GM10248 (cell line): ENCODE measurements at regions of chr3 and their contacts with region 1.

Region 1: DNA sequence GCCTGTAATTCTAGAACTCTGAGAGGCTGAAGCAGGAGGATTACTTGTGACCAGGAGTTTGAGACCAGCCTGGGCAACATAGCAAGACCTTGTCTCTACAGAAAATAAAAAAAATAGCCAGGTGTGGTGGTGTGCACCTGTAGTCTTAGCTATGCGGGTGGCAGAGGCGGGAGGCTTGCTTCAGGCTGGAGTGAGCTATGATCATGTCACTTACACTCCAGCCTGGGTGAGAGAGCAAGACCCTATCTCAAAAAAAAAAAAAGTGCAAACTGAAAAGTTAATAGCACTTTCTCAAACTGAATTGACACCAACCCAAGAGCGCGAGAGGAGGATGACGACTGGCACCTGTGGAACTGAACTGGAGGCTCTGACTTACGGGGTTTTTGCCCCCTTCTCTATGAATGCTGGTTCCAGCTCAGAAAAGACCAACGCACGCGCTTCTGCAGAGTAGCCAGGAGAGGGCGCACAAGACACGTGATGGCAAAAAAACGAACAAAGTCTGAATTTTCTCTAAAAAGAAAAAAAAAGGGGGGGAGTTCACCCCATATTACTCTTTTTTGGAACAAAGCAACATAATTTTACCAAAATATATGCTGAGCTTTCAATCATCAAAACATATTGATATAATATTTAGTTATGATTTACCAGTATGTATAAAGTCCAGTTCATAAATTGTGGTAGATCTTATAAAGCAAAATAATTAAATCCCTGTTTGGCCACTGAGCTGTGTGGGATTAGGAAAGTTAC is 23.7 kb downstream of the CFAP92 start:
- DNase-seq: peak; percentile 68
- CTCF ChIP-seq: peak; percentile 95

Region 2: GRCh38 chr3:128950223-128950938 is 19.8 kb before region 1 on chr3:
- CTCF ChIA-PET with region 1: interaction called, 11 read pairs
- POLR2A ChIA-PET with region 1: no interaction called
- DNase-seq: no peak
- CTCF ChIP-seq: peak; percentile 40

Region 3: DNA sequence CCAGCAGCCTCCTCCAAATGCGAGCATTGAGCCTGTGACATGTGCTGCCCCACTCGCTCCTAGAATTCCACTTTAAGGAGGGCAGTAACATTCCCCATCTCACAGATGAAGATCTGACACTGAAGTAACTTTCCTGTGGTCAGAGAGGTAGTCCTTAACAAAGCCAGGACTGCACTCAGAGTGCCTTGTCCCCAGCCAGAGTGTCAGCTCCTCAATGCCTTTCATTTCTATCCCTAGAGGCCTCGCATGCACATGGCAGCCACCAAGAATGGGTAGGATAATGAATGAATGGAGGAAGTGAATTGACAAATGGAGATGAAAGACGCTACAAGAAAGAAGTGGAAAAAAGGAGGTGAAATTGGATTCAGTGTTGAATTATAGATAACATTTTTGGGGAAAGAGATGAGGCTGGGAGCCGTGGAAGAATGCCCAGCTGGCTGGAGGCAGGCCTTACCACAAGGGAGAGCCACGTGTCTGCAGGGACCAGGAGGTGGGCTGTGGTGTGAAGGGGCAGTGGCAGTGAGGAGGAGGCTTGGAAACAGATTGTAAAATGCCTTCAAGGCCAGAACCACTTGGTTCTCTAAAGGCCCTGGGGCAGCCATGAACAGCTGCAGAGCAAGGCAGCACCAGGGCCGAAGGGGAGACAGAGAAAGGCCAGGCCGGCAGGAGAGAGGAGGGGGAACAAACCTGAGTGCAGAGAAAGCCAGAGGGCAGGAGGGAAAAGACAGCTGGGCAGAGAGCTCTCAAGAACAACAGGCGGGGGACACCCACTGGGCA is 13.3 kb after region 1 on chr3:
- CTCF ChIA-PET with region 1: interaction called, 38 read pairs
- POLR2A ChIA-PET with region 1: no interaction called
- DNase-seq: no peak
- CTCF ChIP-seq: no peak

Region 4: DNA sequence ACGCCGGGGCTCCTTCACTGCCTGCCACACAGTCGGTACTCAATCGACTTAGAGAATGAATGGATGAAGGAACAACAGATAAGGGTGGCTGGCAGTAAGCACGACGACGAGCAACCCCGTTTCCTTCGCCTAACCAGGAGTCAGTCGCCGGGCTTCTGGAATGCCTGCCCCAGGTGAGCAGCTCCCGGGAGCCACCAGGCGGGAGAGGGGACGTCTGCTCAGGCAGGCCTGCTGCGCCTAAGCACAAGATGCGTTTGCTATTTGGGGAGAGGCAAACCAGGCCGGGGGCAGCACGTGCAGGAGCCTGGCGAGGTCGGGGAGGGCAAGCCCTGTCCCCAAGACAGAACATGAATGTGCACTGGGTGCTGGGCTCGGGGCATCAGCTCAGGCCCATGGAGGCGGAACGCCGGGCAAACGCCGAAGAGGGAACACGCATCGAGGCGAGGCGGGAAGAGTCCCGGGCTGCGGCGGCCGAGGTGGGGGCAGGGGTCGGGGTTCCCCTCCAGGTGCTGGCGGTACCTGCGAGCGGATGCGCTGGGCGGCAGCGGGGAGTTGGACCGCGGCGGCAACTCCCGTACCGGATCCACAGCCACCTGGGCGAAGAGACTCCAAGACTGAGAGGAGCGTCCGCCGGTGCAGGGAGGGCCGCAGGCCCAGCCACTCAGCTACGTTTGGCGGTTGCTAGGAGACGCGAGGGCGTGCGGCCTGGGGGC is 23.5 kb after region 1 on chr3 and contains the start of gene CFAP92:
- CTCF ChIA-PET with region 1: interaction called, 19 read pairs
- POLR2A ChIA-PET with region 1: no interaction called
- DNase-seq: peak; percentile 94
- CTCF ChIP-seq: no peak

Region 5: DNA sequence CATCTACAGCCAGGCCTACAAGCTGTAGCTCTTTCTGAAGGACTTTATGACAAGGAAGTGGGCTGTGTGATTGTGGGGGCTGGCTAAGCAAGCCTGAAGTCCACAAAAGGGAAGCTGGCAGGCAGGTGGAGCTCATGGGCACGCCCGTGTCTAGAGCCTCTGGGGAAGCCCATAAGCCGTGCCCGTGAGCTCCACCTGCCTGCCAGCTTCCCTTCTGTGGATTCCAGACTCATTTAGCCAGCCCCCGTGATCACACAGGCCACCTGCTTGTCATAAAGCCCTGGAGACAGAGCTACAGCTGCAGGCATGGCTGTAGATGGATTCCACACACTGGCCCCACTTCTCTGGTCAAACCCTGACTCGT is 46.2 kb after region 1 on chr3:
- CTCF ChIA-PET with region 1: interaction called, 22 read pairs
- POLR2A ChIA-PET with region 1: no interaction called
- DNase-seq: peak; percentile 47
- CTCF ChIP-seq: no peak

Region 6: DNA sequence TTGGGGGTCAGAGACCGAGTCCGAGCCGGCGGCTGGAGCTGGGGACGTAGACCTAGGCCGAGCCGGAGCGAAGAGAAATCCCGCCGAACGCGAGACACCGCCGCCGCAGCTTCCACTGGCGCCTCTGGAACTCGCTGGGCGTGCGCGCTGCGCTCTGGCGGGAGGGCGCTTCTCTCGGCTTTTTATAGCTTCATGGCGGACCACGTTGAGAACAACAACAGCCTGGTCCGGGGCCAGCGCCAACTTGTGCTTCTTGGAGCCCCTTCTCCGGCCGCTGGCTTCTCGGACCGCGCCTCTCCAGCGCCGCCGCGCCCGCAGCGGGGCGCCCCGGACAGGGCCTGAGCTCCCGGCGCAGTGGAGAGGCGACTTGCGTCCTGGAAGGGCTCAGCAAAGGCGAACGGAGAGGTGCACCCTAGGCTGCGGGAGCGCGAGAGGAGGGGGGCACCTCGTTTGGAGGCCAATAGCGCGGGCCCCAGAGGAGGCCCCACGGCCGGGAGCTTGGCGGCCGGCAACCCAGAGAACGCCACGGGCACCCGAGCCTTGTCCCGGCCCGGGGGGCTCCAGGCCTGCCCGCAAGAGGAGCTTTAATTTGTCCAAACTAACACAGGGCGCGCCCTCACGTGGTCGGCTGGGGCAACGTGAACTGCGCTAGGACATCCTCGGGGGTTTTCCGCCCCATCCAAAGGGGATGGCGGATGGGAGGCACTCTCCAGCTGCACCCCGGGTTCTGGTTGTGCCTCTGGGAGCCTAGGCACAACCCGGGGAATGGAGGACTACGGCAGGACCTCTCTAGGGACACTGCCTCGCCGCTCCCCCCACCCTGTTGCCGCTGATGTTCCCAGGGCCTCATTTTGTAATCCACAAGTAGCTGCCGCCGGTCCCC is 346.2 kb after region 1 on chr3:
- CTCF ChIA-PET with region 1: interaction called, 19 read pairs
- POLR2A ChIA-PET with region 1: interaction called, 4 read pairs
- DNase-seq: peak; percentile 83
- CTCF ChIP-seq: peak; percentile 79

Region 7: DNA sequence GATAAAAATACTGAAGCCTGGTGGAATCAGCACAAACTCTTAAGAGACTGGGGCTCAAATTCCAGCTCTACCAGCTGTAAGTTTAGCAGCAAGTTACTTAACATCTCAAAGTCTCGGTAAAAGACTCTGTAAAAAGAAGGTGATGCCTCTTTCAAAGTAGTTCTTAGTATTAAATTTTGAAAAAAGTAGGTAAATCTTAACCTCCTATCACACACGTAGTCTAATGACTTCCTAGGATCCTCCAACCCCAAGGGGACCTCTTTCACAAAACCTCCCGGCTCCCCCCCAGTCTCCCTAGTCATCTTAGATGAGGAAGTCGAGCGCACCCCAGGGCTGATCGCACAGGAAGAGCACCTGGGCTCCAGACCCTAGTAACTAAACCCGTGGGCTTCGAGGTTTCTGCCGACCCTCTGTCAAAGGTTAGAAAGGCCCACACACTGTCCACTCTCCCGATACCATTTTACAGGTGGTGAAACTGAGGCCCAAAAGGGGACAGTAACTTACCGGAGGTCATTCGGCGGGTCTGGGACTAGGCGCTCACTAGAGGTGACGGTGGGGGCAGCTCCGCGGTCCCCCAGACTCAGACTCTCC is 469.2 kb after region 1 on chr3:
- CTCF ChIA-PET with region 1: no interaction called
- POLR2A ChIA-PET with region 1: no interaction called
- DNase-seq: peak; percentile 37
- CTCF ChIP-seq: no peak